Aorta (tissue), 5 donors: ENCODE measurements at regions of chr12 and their contacts with region 1.

Region 1: GRCh38 chr12:113912760-113913329 is 53.3 kb downstream of the RBM19 start:
- DNase-seq: peak in 1 of 2 donors; percentile 61
- ATAC-seq: no peak
- H3K4me3 ChIP-seq: no peak overlapping the region
- H3K27ac ChIP-seq: no peak overlapping the region
- H3K4me1 ChIP-seq: no peaks in the 10 kb centered on the region
- H3K27me3 ChIP-seq: no peaks in the 10 kb centered on the region

Region 2: DNA sequence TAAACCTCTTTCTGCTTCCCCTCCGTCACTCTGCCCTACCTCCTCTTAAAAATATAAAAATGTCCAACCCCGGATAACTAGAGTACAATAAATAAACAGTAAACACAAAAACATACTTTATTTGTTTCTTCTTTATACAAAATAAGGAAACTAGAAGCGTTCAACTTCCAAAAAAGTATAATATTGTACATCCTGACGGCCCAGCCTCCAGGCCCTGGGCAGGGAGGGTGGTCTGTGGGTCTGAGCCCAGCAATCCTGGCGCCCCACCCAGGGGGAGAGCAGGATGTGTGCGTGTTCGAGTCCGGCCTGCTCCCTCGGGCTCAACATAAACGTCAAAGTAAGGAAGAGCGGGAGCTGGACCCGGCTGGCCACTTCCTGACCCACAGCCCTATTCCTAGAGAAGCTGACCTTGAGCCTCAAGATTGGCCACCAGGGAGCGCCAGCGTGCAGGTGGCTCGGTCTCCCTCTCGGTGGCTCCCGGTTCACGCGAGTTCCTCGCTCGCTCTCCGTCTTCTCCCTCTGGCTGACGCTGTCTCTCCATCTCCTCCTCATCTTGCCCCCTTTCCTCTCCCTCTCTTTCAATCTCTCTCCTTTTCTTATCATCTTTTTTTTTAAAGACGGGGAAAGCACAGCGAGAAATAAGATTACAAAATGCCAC is 450.6 kb before region 1 on chr12:
- intact Hi-C with region 1: loop called (anchors 2 to 5 kb)
- DNase-seq: peak; percentile 89 to 94
- ATAC-seq: peak; percentile 80
- H3K4me3 ChIP-seq: peak overlapping the region; percentile 8 to 19
- H3K27ac ChIP-seq: no peak overlapping the region
- H3K4me1 ChIP-seq: no peaks in the 10 kb centered on the region
- H3K27me3 ChIP-seq: no peaks in the 10 kb centered on the region

Region 3: DNA sequence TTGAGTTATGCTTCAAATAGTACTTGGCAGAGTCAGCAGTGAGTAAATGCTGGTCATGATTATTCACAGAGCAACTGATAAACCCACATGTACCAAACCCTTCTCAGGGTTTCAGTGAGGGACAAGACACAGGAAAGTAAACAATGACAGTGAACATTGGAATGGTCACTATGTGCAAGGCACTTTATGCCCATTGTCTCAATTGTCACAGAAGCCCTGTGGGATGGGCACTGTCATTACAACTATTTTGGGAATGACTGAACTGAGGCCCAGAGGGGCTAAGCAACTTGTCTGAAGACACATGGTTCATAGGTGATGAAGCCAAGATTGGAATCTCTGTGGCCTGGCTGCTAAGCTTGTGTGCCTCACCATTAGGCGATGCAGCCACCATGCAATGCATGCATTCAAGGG is 185.2 kb before region 1 on chr12:
- intact Hi-C with region 1: no loop called
- DNase-seq: no peak
- ATAC-seq: no peak
- H3K4me3 ChIP-seq: no peak overlapping the region
- H3K27ac ChIP-seq: no peak overlapping the region
- H3K4me1 ChIP-seq: no peaks in the 10 kb centered on the region
- H3K27me3 ChIP-seq: no peaks in the 10 kb centered on the region

Region 4: DNA sequence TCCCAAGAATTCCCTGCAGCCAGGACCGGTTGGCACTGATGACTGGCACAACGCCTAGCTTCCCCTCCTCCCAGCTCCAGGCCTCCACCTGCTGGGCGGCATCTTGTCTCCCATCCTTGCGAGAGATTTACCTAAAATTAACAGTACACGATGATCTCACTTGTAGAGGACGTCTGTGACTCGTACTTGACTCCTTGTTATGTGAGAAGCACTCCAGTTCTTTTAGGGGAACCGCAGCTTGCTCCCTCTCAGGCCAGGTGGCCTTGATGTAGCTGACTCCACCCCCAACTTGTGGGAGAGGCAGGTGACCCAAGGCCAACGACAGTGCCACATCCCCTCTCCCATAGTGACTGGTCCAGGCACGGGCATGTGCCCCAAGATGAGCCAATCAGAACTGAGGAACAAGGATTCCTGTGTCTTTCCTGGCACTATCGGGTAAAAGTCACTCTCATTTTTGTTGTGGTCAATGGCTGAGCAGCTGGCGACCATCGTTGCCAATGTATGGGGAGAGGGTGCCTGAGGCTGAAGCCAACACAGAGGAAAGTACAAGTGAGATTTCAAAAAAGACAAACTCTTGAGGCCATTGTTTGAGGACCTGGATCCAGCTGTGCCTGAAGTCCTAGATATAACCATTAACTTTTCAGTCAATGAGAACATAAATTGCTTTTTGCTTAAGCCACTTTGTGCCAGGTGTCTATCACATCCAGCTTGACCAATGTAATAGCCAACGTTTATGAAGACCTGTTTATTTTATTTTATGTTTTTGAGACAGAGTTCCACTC is 155.4 kb before region 1 on chr12:
- intact Hi-C with region 1: no loop called
- DNase-seq: no peak
- ATAC-seq: no peak
- H3K4me3 ChIP-seq: no peak overlapping the region
- H3K27ac ChIP-seq: no peak overlapping the region
- H3K4me1 ChIP-seq: no peaks in the 10 kb centered on the region
- H3K27me3 ChIP-seq: no peaks in the 10 kb centered on the region

Region 5: GRCh38 chr12:113862590-113863454 is 50.0 kb before region 1 on chr12:
- intact Hi-C with region 1: no loop called
- DNase-seq: no peak
- ATAC-seq: no peak
- H3K4me3 ChIP-seq: no peak overlapping the region
- H3K27ac ChIP-seq: no peak overlapping the region
- H3K4me1 ChIP-seq: no peaks in the 10 kb centered on the region
- H3K27me3 ChIP-seq: no peaks in the 10 kb centered on the region